AG04449 (cell line): ENCODE measurements at regions of chr12 and their contacts with region 1.

Region 1: GRCh38 chr12:115468087-115468510 is 784.1 kb upstream of the TBX3 start:
- DNase-seq: no peak
- H3K4me3 ChIP-seq: no peak overlapping the region
- CTCF ChIP-seq: peak; percentile 55

Region 2: GRCh38 chr12:114648711-114649110 is 819.4 kb before region 1 on chr12:
- CTCF ChIA-PET with region 1: no interaction called
- POLR2A ChIA-PET with region 1: no interaction called
- DNase-seq: no peak
- H3K4me3 ChIP-seq: no peak overlapping the region
- CTCF ChIP-seq: no peak

Region 3: DNA sequence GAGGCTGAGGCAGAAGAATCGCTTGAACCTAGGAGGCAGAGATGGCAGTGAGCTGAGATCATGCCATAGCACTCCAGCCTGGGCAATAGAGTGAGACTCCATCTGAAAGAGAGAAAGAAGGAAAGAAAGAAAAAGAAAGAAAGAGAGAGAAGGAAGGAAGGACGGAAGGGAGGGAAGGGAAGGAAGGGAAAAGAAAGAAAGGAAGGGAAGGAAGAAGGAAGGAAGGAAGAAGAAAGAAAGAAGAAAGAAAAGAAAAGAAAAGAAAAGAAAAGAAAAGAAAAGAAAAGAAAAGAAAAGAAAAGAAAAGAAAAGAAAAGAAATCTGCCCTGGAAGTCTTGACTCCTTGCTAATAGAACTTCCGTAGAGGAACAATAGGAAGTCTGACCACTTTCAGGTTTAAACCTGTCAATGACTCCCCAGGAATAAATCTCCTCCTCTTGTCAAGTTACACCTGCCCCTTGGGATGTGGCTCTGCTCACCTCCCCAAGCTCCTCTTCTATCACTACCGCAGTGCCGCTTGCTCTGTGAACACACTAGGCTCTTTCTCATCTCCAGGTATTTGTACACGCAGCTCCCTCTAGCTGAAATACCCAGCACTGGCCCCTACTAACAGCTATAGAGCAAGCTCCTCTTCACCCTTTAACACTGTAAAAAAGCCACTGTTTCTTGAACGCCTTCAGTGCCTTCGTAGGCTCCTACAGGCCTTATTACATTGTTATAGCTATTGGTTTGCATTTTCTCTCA is 11.0 kb before region 1 on chr12:
- CTCF ChIA-PET with region 1: interaction called, 23 read pairs
- POLR2A ChIA-PET with region 1: no interaction called
- DNase-seq: no peak
- H3K4me3 ChIP-seq: no peak overlapping the region
- CTCF ChIP-seq: no peak